Activated T-helper 1 cell treated with anti-CD3 and anti-CD28 coated beads, Interleukin-12 subunit alpha, Interleukin-12 subunit beta, Interleukin-2, Interleukin-4 antibody, amounts not matched to agents 30 ng/mL and 10 ng/mL and 1 ng/mL, durations not matched to agents 14 hours and 24 hours and 36 hours (primary cell): ENCODE measurements at regions of chr9 and their contacts with region 1.

Region 1: DNA sequence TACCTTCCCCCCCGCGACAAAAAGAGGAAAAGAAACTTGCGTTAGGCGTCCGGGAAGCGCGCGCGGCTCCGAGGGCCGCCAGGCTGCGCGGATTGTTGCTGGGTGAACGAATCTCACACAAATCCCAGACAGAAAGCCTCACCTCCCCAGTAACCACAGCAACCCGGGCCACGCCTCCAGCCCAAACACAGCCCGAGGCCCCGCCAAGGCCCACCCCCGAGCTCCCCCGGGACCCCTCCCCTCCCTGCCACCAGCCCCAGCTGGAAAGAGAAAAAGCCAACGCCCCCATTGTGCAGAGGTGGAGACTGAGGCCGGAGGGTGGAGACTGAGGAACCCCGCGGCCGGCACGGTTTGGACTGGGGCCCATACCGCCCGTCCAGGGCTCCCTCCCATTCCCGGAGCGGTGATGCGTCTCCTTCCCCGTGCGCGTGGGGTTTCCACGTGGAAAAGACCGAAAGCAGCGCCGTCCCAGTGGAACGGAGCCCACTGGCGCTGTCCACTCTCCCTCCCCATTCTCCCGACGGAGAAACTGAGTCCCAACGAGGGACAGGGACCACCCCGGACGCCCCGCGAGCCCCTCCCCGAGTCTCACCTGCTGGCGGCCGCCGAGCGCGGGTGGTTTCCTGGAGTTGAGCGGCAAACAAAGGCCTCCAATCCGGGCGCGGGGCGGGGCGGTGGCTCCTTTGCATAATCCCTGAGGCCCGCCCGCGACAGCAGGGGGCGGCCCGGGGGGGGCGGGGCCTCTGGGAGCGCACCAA is 10.2 kb upstream of the AKNA start:
- DNase-seq: peak; percentile 94
- H3K4me3 Mint-ChIP-seq: peak overlapping the region; percentile 97
- H3K27ac Mint-ChIP-seq: peak overlapping the region; percentile 86
- H3K4me1 Mint-ChIP-seq: peaks cover 46% of the 10 kb centered on the region
- H3K27me3 Mint-ChIP-seq: peaks cover 3% of the 10 kb centered on the region

Region 2: GRCh38 chr9:114339130-114339908 is 58.7 kb before region 1 on chr9:
- intact Hi-C with region 1: loop called (anchors 2 kb)
- DNase-seq: no peak
- H3K4me3 Mint-ChIP-seq: no peak overlapping the region
- H3K27ac Mint-ChIP-seq: peak overlapping the region; percentile 48
- H3K4me1 Mint-ChIP-seq: peaks cover 5% of the 10 kb centered on the region
- H3K27me3 Mint-ChIP-seq: no peaks in the 10 kb centered on the region

Region 3: DNA sequence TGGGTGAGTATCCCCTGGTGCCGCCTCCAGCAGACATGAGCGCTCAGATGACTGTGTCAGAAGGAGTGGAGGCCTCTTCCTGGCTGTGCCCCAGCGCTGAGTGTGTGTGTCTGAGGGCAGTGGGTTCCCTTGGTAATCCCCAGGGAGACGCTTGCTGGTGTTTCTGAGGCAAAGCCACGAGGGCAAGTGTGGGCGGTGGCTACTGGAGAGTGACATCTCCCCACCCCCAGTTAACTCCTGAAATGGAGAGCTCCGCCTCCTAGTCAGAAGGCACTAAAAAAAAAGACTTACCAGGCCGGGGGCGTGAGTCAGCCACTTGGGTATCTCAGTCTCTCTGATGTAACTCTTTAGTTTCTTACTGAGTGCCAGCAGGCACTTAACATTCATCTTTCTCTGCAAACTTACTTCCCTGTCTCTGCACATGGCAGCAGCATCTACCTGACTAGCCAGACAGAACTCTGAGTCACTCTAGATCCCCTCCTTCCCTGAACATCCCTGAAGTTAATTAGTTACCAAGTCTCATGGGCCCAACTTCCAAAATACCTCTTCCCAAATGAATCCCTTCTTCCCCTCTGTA is 49.0 kb before region 1 on chr9:
- intact Hi-C with region 1: loop called (anchors 1 kb)
- DNase-seq: peak; percentile 62
- H3K4me3 Mint-ChIP-seq: peak overlapping the region; percentile 72
- H3K27ac Mint-ChIP-seq: peak overlapping the region; percentile 97
- H3K4me1 Mint-ChIP-seq: peaks cover 56% of the 10 kb centered on the region
- H3K27me3 Mint-ChIP-seq: no peaks in the 10 kb centered on the region

Region 4: GRCh38 chr9:114362394-114362793 is 35.6 kb before region 1 on chr9:
- intact Hi-C with region 1: no loop called
- DNase-seq: no peak
- H3K4me3 Mint-ChIP-seq: no peak overlapping the region
- H3K27ac Mint-ChIP-seq: peak overlapping the region; percentile 95
- H3K4me1 Mint-ChIP-seq: peaks cover 77% of the 10 kb centered on the region
- H3K27me3 Mint-ChIP-seq: no peaks in the 10 kb centered on the region

Region 5: GRCh38 chr9:114372921-114373448 is 25.0 kb before region 1 on chr9:
- intact Hi-C with region 1: loop called (anchors 1 kb)
- DNase-seq: peak; percentile 83
- H3K4me3 Mint-ChIP-seq: peak overlapping the region; percentile 77
- H3K27ac Mint-ChIP-seq: peak overlapping the region; percentile 92
- H3K4me1 Mint-ChIP-seq: peaks cover 81% of the 10 kb centered on the region
- H3K27me3 Mint-ChIP-seq: no peaks in the 10 kb centered on the region

Region 6: GRCh38 chr9:114505187-114506081 is 107.4 kb after region 1 on chr9 and contains the start of gene WHRN:
- intact Hi-C with region 1: loop called (anchors 1 kb)
- DNase-seq: peak; percentile 89
- H3K4me3 Mint-ChIP-seq: peak within 1 kb of the TSS; percentile 85
- H3K27ac Mint-ChIP-seq: peak within 1 kb of the TSS; percentile 79
- H3K4me1 Mint-ChIP-seq: peaks cover 19% of the 10 kb centered on the region
- H3K27me3 Mint-ChIP-seq: peaks cover 62% of the 10 kb centered on the region
- total RNA-seq, gene WHRN: 2.2 and 2.4 TPM in 2 replicates

Region 7: GRCh38 chr9:114594136-114594535 is 196.1 kb after region 1 on chr9:
- intact Hi-C with region 1: no loop called
- DNase-seq: no peak
- H3K4me3 Mint-ChIP-seq: no peak overlapping the region
- H3K27ac Mint-ChIP-seq: no peak overlapping the region
- H3K4me1 Mint-ChIP-seq: peaks cover 50% of the 10 kb centered on the region
- H3K27me3 Mint-ChIP-seq: no peaks in the 10 kb centered on the region